B cell (primary cell): ENCODE measurements at regions of chr1 and their contacts with region 1.

Region 1: GRCh38 chr1:150281837-150282653 is at the start of gene CIART:
- DNase-seq: peak; percentile 88
- ATAC-seq: peak; percentile 86
- H3K4me3 ChIP-seq: peak within 1 kb of the TSS; percentile 30 to 74 (median 59)
- H3K4me3 Mint-ChIP-seq: peak within 1 kb of the TSS; percentile 91
- H3K27ac ChIP-seq: no peak within 1 kb of the TSS
- H3K27ac Mint-ChIP-seq: peak within 1 kb of the TSS; percentile 73
- H3K4me1 ChIP-seq: peaks cover 20 to 23% of the 10 kb centered on the region in 2 donors
- H3K4me1 Mint-ChIP-seq: peaks cover 18% of the 10 kb centered on the region
- H3K27me3 ChIP-seq: peaks cover 0 to 12% (median 6%) of the 10 kb centered on the region in 4 experiments
- H3K27me3 Mint-ChIP-seq: peaks cover 4% of the 10 kb centered on the region
- CTCF ChIP-seq: no peak
- total RNA-seq, gene CIART: 0.27 TPM in 1 of 2 replicates, not detected in the other

Region 2: DNA sequence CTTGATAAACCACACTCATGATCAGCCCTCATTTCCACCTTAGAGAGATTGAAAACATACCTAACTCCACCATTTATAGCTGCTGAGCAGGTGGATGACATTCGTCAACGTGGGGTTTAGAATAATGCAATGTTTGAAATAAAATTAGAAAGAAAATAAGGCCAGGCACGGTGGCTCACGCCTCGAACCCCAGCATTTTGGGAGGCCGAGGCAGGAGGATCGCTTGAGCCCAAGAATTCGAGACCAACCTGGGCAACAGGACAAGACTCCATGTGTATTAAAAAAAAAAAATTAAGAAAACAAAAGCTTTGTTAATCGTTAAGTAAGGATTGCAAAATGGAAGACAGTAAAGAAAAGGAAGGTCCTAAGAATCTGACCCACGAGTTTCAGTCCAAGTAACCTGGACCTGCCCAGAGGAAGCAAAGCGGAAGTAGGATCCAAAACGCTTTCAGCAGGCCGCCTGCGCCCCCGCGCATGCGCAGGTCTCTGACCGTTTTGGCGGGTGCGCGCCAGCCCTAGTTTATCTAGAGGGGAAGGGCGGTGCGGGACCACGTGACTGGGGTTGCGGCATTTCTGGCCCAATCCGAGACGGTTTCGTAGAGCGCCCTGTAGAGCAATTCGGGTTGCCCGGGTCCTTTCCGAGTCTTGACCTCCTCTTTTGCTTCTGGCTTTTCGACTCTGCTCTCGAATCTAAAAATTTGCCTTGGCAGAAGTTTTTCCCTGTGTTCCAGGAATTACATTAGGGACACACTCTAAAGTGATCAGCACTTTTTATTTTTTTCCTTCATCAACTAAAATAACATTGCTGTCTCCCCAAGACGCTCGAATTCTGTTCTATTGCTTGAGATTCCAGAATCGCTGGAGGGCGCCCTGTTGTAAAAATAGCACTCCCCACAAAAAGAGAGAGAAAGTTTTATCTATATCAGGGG is 68.6 kb before region 1 on chr1:
- CTCF ChIA-PET with region 1: no interaction called
- POLR2A ChIA-PET with region 1: no interaction called
- intact Hi-C with region 1: no loop called
- DNase-seq: peak; percentile 94
- ATAC-seq: peak; percentile 99
- H3K4me3 ChIP-seq: peak overlapping the region; percentile 51 to 89 (median 70)
- H3K4me3 Mint-ChIP-seq: peak overlapping the region; percentile 93
- H3K27ac ChIP-seq: peak overlapping the region; percentile 73 to 74
- H3K27ac Mint-ChIP-seq: peak overlapping the region; percentile 95
- H3K4me1 ChIP-seq: peaks cover 6 to 13% of the 10 kb centered on the region in 2 donors
- H3K4me1 Mint-ChIP-seq: peaks cover 16% of the 10 kb centered on the region
- H3K27me3 ChIP-seq: no peaks in the 10 kb centered on the region
- H3K27me3 Mint-ChIP-seq: no peaks in the 10 kb centered on the region
- CTCF ChIP-seq: peak; percentile 60

Region 3: GRCh38 chr1:150259758-150260669 is 22.0 kb before region 1 on chr1:
- CTCF ChIA-PET with region 1: interaction called, 60 read pairs
- POLR2A ChIA-PET with region 1: no interaction called
- intact Hi-C with region 1: loop called (anchors 1 kb)
- DNase-seq: no peak
- ATAC-seq: no peak
- H3K4me3 ChIP-seq: no peak overlapping the region
- H3K4me3 Mint-ChIP-seq: no peak overlapping the region
- H3K27ac ChIP-seq: no peak overlapping the region
- H3K27ac Mint-ChIP-seq: no peak overlapping the region
- H3K4me1 ChIP-seq: peaks cover 14 to 15% of the 10 kb centered on the region in 2 donors
- H3K4me1 Mint-ChIP-seq: peaks cover 13% of the 10 kb centered on the region
- H3K27me3 ChIP-seq: peaks cover 0 to 36% (median 24%) of the 10 kb centered on the region in 4 experiments
- H3K27me3 Mint-ChIP-seq: peaks cover 40% of the 10 kb centered on the region
- CTCF ChIP-seq: no peak

Region 4: DNA sequence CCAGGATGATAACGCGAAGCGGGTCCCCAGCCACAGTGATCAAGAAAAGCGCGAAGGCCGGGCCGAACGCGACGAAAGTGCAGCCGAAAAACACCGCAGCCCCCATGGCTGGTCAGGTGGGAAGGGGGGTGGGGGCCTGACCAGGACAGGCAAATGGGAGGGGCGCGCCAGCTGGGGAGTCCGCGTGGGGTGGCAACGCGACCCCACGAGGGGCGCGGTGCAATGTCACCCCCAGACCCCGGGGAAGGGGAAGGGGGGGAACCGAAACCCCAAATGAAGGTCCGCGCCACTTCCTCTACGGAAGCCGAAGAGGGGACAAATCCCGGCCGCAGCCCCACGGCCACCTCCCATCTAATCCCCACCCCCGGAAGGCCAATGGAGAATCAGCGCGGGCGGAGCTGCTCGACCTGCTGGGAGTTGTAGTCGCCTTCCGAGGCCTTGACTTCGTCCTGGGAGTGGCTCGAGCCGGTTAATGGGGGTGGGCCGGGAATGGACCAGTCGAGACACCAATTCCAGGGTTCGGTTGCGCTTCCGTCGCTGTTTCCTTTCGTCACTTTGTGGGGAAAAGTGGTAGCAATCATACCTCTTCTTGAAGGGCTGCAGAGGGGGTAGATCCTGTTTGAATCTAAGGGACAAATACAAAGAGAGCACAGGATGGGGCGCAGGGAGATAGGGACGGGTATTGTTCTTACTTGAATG is 13.2 kb before region 1 on chr1 and contains the start of gene APH1A:
- CTCF ChIA-PET with region 1: interaction called, 22 read pairs
- POLR2A ChIA-PET with region 1: interaction called, 6 read pairs
- intact Hi-C with region 1: loop called (anchors 1 kb)
- DNase-seq: peak; percentile 96
- ATAC-seq: peak; percentile 98
- H3K4me3 ChIP-seq: peak within 1 kb of the TSS; percentile 62 to 98 (median 95)
- H3K4me3 Mint-ChIP-seq: peak within 1 kb of the TSS; percentile 97
- H3K27ac ChIP-seq: peak within 1 kb of the TSS; percentile 94 to 95
- H3K27ac Mint-ChIP-seq: peak within 1 kb of the TSS; percentile 98
- H3K4me1 ChIP-seq: peaks cover 19 to 27% of the 10 kb centered on the region in 2 donors
- H3K4me1 Mint-ChIP-seq: peaks cover 30% of the 10 kb centered on the region
- H3K27me3 ChIP-seq: no peaks in the 10 kb centered on the region
- H3K27me3 Mint-ChIP-seq: peaks cover 6% of the 10 kb centered on the region
- CTCF ChIP-seq: no peak
- total RNA-seq, gene APH1A: 134 and 135 TPM in 2 replicates

Region 5: GRCh38 chr1:150309770-150310508 is 27.9 kb after region 1 on chr1:
- CTCF ChIA-PET with region 1: no interaction called
- POLR2A ChIA-PET with region 1: no interaction called
- intact Hi-C with region 1: no loop called
- DNase-seq: no peak
- ATAC-seq: no peak
- H3K4me3 ChIP-seq: no peak overlapping the region
- H3K4me3 Mint-ChIP-seq: no peak overlapping the region
- H3K27ac ChIP-seq: no peak overlapping the region
- H3K27ac Mint-ChIP-seq: no peak overlapping the region
- H3K4me1 ChIP-seq: no peaks in the 10 kb centered on the region
- H3K4me1 Mint-ChIP-seq: no peaks in the 10 kb centered on the region
- H3K27me3 ChIP-seq: no peaks in the 10 kb centered on the region
- H3K27me3 Mint-ChIP-seq: no peaks in the 10 kb centered on the region
- CTCF ChIP-seq: no peak

Region 6: DNA sequence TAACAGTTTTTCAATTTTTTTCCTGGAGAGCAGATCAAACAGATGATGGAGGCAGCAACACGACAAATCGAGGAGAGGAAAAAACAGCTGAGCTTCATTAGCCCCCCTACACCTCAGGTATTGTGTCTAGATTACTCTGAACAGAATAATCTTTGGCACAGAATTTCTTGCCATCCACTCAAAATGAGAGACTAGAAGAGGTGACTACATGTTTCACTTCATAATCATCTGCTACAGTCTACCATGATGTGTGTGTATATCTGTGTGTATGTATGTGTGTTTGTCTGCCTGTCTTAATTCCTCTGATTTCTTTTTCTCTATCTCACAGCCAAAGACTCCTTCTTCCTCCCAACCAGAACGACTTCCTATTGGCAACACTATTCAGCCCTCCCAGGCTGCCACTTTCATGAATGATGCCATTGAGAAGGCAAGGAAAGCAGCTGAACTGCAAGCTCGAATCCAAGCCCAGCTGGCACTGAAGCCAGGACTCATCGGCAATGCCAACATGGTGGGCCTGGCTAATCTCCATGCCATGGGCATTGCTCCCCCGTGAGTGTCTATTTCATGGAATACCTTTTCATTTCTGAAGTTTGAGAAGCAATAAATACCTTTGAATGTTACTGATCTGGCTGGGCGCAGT is 50.7 kb after region 1 on chr1:
- CTCF ChIA-PET with region 1: no interaction called
- POLR2A ChIA-PET with region 1: no interaction called
- intact Hi-C with region 1: no loop called
- DNase-seq: no peak
- ATAC-seq: no peak
- H3K4me3 ChIP-seq: no peak overlapping the region
- H3K4me3 Mint-ChIP-seq: no peak overlapping the region
- H3K27ac ChIP-seq: no peak overlapping the region
- H3K27ac Mint-ChIP-seq: peak overlapping the region; percentile 17
- H3K4me1 ChIP-seq: no peaks in the 10 kb centered on the region
- H3K4me1 Mint-ChIP-seq: no peaks in the 10 kb centered on the region
- H3K27me3 ChIP-seq: no peaks in the 10 kb centered on the region
- H3K27me3 Mint-ChIP-seq: no peaks in the 10 kb centered on the region
- CTCF ChIP-seq: no peak